ENCODE measurements at regions of chr14 and their contacts with region 1.

Region 1: GRCh38 chr14:106417224-106418049 is 891.1 kb downstream of the TMEM121 start:
- DNase-seq: peak; percentile 72
- ATAC-seq: peak; percentile 99
- H3K4me3 ChIP-seq: no peak overlapping the region
- H3K27ac ChIP-seq: no peak overlapping the region
- H3K4me1 ChIP-seq: no peaks in the 10 kb centered on the region
- H3K27me3 ChIP-seq: no peaks in the 10 kb centered on the region; a peak in 1 of 4 replicates
- CTCF ChIP-seq: peak; percentile 99 to 100 (median 100)
- EP300 ChIP-seq: no peak
- POLR2A ChIP-seq: no peak
- RAD21 ChIP-seq: peak; percentile 49; the same call in 1 of the 2 replicates

Region 2: GRCh38 chr14:106069804-106070625 is 347.4 kb before region 1 on chr14:
- CTCF ChIA-PET with region 1: no interaction called
- POLR2A ChIA-PET with region 1: no interaction called
- RAD21 ChIA-PET with region 1: no interaction called
- SMC1A ChIA-PET with region 1: no interaction called
- in situ Hi-C with region 1: no loop called
- intact Hi-C with region 1: no loop called
- DNase-seq: no peak
- ATAC-seq: no peak
- H3K4me3 ChIP-seq: no peak overlapping the region
- H3K27ac ChIP-seq: no peak overlapping the region
- H3K4me1 ChIP-seq: no peaks in the 10 kb centered on the region
- H3K27me3 ChIP-seq: no peaks in the 10 kb centered on the region
- CTCF ChIP-seq: no peak
- EP300 ChIP-seq: no peak
- POLR2A ChIP-seq: no peak
- RAD21 ChIP-seq: no peak

Region 3: DNA sequence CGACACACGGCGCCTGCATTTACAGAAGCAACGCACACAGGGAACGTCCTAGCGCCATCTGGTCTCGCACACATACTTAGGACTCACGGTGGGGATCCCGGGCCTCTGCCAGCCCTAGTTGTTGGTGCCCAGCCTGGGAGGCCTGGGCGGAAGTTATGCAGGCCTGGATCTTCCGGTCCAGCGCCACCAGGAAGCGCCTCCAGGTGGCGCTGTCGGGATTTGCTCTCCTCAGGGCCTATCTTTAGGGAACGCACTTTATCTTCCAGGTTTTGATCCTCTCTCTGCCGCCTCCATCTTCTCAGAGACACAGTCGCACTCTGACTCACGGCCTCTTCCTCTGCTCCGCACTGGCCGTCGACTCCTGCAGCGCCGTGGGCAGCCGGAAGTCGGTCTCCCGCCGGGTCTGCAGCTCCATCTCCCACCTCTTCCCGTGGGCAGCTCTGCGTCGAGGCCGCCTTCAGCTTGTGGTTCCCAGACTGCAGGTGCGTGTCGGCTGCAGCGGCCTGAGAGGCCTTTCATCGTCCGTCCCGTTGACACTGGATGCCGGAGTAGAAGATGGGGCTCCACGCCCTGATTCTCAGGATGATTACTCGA is 130.6 kb before region 1 on chr14:
- CTCF ChIA-PET with region 1: interaction called, 17 read pairs
- POLR2A ChIA-PET with region 1: no interaction called
- RAD21 ChIA-PET with region 1: no interaction called
- SMC1A ChIA-PET with region 1: no interaction called
- in situ Hi-C with region 1: no loop called
- intact Hi-C with region 1: no loop called
- DNase-seq: no peak
- ATAC-seq: peak; percentile 74
- H3K4me3 ChIP-seq: no peak overlapping the region
- H3K27ac ChIP-seq: no peak overlapping the region
- H3K4me1 ChIP-seq: no peaks in the 10 kb centered on the region
- H3K27me3 ChIP-seq: no peaks in the 10 kb centered on the region; a peak in 1 of 4 replicates
- CTCF ChIP-seq: peak; percentile 45 to 69 (median 52); a peak in 5 of 6 replicates
- EP300 ChIP-seq: no peak
- POLR2A ChIP-seq: no peak
- RAD21 ChIP-seq: peak; percentile 26; the same call in 1 of the 2 replicates

Region 4: GRCh38 chr14:106372870-106373652 is 44.4 kb before region 1 on chr14:
- CTCF ChIA-PET with region 1: interaction called, 78 read pairs
- POLR2A ChIA-PET with region 1: no interaction called
- RAD21 ChIA-PET with region 1: interaction called, 13 read pairs
- SMC1A ChIA-PET with region 1: interaction called, 15 read pairs
- in situ Hi-C with region 1: no loop called
- intact Hi-C with region 1: no loop called
- DNase-seq: no peak
- ATAC-seq: peak; percentile 99
- H3K4me3 ChIP-seq: no peak overlapping the region
- H3K27ac ChIP-seq: no peak overlapping the region
- H3K4me1 ChIP-seq: peaks cover 6% of the 10 kb centered on the region; the same call in 1 of the 2 replicates
- H3K27me3 ChIP-seq: no peaks in the 10 kb centered on the region; a peak in 2 of 4 replicates
- CTCF ChIP-seq: peak; percentile 86 to 93 (median 89)
- EP300 ChIP-seq: 0 out of 4 replicates have a peak, but pooled peaks of 1 of the 2 experiments have one; percentile 9
- POLR2A ChIP-seq: no peak
- RAD21 ChIP-seq: peak; percentile 88

Region 5: GRCh38 chr14:106455026-106455425 is 37.6 kb after region 1 on chr14:
- CTCF ChIA-PET with region 1: interaction called, 20 read pairs
- POLR2A ChIA-PET with region 1: no interaction called
- RAD21 ChIA-PET with region 1: no interaction called
- SMC1A ChIA-PET with region 1: interaction called, 8 read pairs
- in situ Hi-C with region 1: no loop called
- intact Hi-C with region 1: no loop called
- DNase-seq: no peak
- ATAC-seq: no peak
- H3K4me3 ChIP-seq: no peak overlapping the region
- H3K27ac ChIP-seq: no peak overlapping the region
- H3K4me1 ChIP-seq: no peaks in the 10 kb centered on the region
- H3K27me3 ChIP-seq: no peaks in the 10 kb centered on the region
- CTCF ChIP-seq: no peak
- EP300 ChIP-seq: no peak
- POLR2A ChIP-seq: no peak
- RAD21 ChIP-seq: no peak

Region 6: GRCh38 chr14:106518054-106518943 is 100.9 kb after region 1 on chr14:
- CTCF ChIA-PET with region 1: interaction called, 205 read pairs
- POLR2A ChIA-PET with region 1: no interaction called
- RAD21 ChIA-PET with region 1: interaction called, 3 read pairs
- SMC1A ChIA-PET with region 1: interaction called, 4 read pairs
- in situ Hi-C with region 1: no loop called
- intact Hi-C with region 1: no loop called
- DNase-seq: no peak
- ATAC-seq: peak; percentile 84
- H3K4me3 ChIP-seq: no peak overlapping the region
- H3K27ac ChIP-seq: no peak overlapping the region
- H3K4me1 ChIP-seq: peaks cover 10% of the 10 kb centered on the region
- H3K27me3 ChIP-seq: no peaks in the 10 kb centered on the region; a peak in 1 of 4 replicates
- CTCF ChIP-seq: peak; percentile 63 to 76 (median 75)
- EP300 ChIP-seq: no peak
- POLR2A ChIP-seq: no peak
- RAD21 ChIP-seq: peak; percentile 78

Region 7: GRCh38 chr14:106831322-106831720 is 413.9 kb after region 1 on chr14:
- CTCF ChIA-PET with region 1: interaction called, 16 read pairs
- POLR2A ChIA-PET with region 1: no interaction called
- RAD21 ChIA-PET with region 1: no interaction called
- SMC1A ChIA-PET with region 1: no interaction called
- in situ Hi-C with region 1: no loop called
- intact Hi-C with region 1: no loop called
- DNase-seq: no peak
- ATAC-seq: peak; percentile 88
- H3K4me3 ChIP-seq: no peak overlapping the region
- H3K27ac ChIP-seq: no peak overlapping the region
- H3K4me1 ChIP-seq: no peaks in the 10 kb centered on the region; the same call in 1 of the 2 replicates
- H3K27me3 ChIP-seq: no peaks in the 10 kb centered on the region
- CTCF ChIP-seq: peak; percentile 93 to 99 (median 96)
- EP300 ChIP-seq: no peak
- POLR2A ChIP-seq: no peak
- RAD21 ChIP-seq: peak; percentile 43